Sigmoid colon (tissue), 7 donors: ENCODE measurements at regions of chr9 and their contacts with region 1.

Region 1: DNA sequence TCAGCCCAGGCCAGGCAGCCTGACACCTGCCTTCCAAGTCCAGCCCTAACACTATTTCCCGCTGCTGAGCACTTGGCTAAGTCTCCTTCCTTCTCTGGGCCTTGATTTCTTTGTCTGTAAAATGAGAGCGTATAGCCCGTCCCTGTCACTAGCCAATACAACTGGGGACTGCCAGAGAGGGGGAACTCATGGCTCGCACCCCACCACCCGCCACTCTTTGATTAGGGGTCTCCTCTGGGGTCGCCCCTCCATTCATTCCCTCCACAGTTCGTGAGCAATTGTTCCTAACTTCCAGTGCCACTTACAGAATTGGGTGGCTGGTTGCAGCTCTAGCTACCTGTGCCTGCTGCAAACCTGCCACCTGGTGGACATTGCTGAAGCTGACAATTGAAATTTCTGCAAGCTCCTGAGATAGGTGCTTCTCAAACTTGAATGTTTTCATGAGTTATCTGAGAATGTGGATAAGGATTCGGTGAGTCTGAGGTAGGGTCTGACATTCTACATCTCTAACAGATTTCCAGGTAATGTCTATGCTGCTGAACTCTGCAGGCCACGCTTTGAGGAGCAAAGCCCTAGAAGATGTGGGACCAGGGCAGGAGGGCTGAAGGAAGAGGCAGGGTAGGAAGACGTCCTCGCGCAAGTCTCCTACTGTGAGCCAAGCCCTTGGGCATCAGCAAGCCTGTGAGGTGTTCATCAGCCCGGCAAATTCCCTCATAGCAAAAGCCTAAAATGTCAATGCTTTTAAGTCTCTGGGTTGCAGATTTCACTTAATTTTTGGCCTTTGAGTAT is 13.3 kb upstream of the RECK start:
- DNase-seq: no peak
- H3K4me3 ChIP-seq: no peak overlapping the region
- H3K27ac ChIP-seq: no peak overlapping the region
- H3K4me1 ChIP-seq: no peaks in the 10 kb centered on the region
- H3K27me3 ChIP-seq: no peaks in the 10 kb centered on the region
- CTCF ChIP-seq: peak in 3 of 4 experiments; percentile 53 to 69 (median 61)
- EP300 ChIP-seq: no peak
- POLR2A ChIP-seq: no peak

Region 2: GRCh38 chr9:35675732-35676392 is 347.6 kb before region 1 on chr9:
- intact Hi-C with region 1: no loop called
- DNase-seq: no peak
- H3K4me3 ChIP-seq: peak overlapping the region; percentile 37 to 56 (median 48)
- H3K27ac ChIP-seq: peak overlapping the region in 3 of 4 donors; percentile 13 to 52 (median 28)
- H3K4me1 ChIP-seq: peaks cover 0 to 28% (median 26%) of the 10 kb centered on the region in 4 donors
- H3K27me3 ChIP-seq: no peaks in the 10 kb centered on the region
- CTCF ChIP-seq: no peak
- EP300 ChIP-seq: no peak
- POLR2A ChIP-seq: no peak

Region 3: DNA sequence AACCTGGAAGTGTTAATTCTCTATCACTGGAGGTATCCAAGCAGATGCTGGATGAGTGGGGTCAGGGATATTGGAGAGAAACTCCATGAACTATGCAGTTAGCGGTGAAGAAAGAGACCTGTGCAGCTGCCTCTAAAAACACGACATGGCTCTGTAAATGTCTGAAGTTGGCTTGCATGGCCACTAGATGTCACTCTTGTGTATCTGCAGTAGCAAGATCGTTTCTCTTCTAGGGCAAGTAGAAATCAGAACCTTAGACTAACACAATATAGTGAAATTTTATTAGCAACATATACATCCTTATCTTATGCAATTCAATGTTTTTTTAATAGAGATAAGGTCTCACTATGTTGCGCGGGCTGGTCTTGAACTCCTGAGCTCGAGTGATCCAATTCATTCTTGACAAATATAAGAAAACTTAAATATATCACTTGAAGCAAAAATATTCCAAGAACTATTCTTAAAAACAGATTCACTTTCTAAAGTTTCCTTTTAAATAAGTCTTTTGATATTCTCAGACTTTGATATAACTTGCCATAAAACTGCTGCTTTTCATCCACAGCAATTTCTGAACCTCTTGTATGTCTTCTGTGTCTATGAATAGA is 68.4 kb before region 1 on chr9:
- intact Hi-C with region 1: loop called (anchors 5 kb)
- DNase-seq: no peak
- H3K4me3 ChIP-seq: no peak overlapping the region
- H3K27ac ChIP-seq: no peak overlapping the region
- H3K4me1 ChIP-seq: no peaks in the 10 kb centered on the region
- H3K27me3 ChIP-seq: peaks cover 0 to 4% (median 0%) of the 10 kb centered on the region in 3 donors
- CTCF ChIP-seq: peak; percentile 38 to 88 (median 78)
- EP300 ChIP-seq: no peak
- POLR2A ChIP-seq: no peak

Region 4: GRCh38 chr9:36064448-36065037 is 41.1 kb after region 1 on chr9:
- intact Hi-C with region 1: no loop called
- DNase-seq: no peak
- H3K4me3 ChIP-seq: no peak overlapping the region
- H3K27ac ChIP-seq: no peak overlapping the region
- H3K4me1 ChIP-seq: no peaks in the 10 kb centered on the region
- H3K27me3 ChIP-seq: no peaks in the 10 kb centered on the region
- CTCF ChIP-seq: no peak
- EP300 ChIP-seq: no peak
- POLR2A ChIP-seq: no peak